Activated B cell treated with CpG ODN at 0.5 μM for 24 hours (primary cell): ENCODE measurements at regions of chr10 and their contacts with region 1.

Region 1: DNA sequence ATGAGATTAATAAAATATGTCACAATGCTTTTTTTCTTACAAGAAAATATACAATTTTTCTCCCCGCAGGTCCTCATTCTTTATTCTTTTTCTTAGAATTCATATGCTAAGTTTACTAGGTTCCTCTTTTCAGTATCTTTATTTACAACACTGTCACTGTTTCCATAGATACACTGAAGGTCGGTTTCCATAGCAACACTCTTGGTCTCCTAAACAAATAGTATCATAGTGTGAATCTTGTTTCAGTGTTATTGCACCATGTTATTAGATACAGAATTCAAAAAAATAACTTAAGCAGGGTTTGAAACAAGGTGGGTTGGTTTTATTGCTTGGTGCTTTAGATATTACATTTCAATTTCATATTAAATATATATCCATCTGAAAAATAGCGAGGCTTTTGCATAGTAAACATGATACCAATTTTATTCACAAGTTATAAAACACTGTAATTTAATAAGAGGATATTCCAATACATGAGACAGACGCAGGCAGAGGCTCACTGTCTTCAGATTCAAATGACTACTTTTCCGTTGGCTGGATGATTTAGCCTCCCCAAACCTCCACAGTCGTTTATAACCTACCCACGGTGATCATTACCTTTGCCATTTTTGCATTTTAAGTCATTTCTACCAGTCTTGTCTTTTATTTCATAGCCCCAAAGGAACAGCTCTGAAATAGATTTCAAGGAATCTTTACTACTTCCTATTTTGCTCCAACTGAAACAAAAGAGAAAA is 88.9 kb upstream of the KLF6 start:
- DNase-seq: no peak
- ATAC-seq: peak; percentile 43
- H3K4me3 Mint-ChIP-seq: peak overlapping the region; percentile 45
- H3K27ac Mint-ChIP-seq: peak overlapping the region; percentile 96
- H3K4me1 Mint-ChIP-seq: peaks cover 60% of the 10 kb centered on the region
- H3K27me3 Mint-ChIP-seq: no peaks in the 10 kb centered on the region
- CTCF ChIP-seq: no peak

Region 2: DNA sequence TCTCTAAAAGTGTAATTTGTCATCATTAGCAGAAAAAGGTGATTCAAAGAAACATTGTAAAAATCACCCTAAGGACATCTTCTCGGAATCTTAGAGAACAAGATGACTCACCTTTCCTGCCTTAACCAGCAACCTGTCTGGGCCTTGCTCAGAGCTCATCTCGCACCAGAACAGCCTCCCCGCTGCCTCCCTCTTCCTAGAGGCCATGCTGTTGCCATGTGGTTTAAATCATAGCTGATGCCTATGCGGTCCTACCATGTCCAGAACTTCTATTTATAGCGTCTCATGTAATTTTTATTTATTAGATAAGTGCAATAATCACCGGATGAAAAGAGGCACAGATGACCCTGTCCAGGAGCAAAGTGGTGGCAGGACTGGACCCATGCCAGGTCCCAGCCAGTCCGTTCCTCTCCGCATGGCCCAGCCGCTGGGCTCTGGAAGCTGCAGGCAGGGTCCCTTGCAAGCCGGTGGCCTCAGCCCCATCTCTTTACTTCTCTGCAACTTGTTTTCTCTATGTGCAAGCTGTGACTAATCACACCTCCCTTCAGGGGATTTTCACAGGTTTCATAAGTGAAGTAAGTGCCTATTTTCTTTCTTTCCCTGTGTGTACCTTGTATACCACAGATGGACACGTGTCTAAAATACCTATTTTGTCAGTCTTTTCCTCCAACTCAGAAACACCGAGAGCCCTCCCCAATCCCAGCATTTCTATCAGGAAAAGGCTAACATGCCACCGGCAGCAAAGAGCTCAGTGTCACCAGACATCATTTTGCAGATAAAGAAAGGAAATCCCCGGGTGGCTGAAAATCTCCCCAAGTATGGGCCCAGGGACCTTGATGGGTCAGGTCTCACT is 116.0 kb before region 1 on chr10:
- CTCF ChIA-PET with region 1: no interaction called
- POLR2A ChIA-PET with region 1: interaction called, 8 read pairs
- intact Hi-C with region 1: loop called (anchors 1 kb)
- DNase-seq: no peak
- ATAC-seq: peak; percentile 60
- H3K4me3 Mint-ChIP-seq: peak overlapping the region; percentile 78
- H3K27ac Mint-ChIP-seq: peak overlapping the region; percentile 99
- H3K4me1 Mint-ChIP-seq: peaks cover 76% of the 10 kb centered on the region
- H3K27me3 Mint-ChIP-seq: no peaks in the 10 kb centered on the region
- CTCF ChIP-seq: no peak

Region 3: DNA sequence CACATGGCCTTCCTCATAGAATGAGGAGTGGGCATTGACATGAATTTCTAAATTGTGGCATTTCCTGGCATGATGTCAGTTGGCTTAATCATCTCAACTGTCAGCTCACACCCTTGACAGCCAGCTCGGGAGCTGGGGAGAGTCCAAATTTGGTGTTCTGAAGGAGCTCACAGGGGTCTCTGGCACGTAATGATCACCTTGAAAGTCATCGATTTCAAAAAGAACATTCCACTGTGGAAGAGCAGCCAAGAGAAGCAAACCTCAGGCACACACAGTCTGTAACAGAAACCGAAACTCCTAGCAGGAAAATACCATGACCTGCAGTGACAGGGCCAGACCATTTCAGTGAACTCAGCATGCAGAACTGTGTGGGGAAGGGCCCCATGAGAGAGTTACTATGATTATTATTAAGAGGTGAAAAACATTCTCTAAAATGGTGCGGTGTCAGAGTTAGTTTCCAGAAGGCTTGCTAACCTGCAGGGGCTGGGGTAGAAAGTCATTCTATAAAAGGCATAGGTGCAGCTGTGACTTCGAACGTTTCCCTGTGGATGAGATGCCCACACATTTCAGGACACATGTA is 62.5 kb before region 1 on chr10:
- CTCF ChIA-PET with region 1: no interaction called
- POLR2A ChIA-PET with region 1: no interaction called
- intact Hi-C with region 1: loop called (anchors 1 kb)
- DNase-seq: peak; percentile 29
- ATAC-seq: peak; percentile 95
- H3K4me3 Mint-ChIP-seq: peak overlapping the region; percentile 74
- H3K27ac Mint-ChIP-seq: peak overlapping the region; percentile 84
- H3K4me1 Mint-ChIP-seq: peaks cover 52% of the 10 kb centered on the region
- H3K27me3 Mint-ChIP-seq: no peaks in the 10 kb centered on the region
- CTCF ChIP-seq: no peak

Region 4: GRCh38 chr10:3887885-3888476 is 14.1 kb after region 1 on chr10:
- CTCF ChIA-PET with region 1: no interaction called
- POLR2A ChIA-PET with region 1: interaction called, 5 read pairs
- intact Hi-C with region 1: loop called (anchors 2 kb)
- DNase-seq: no peak
- ATAC-seq: peak; percentile 83
- H3K4me3 Mint-ChIP-seq: peak overlapping the region; percentile 13
- H3K27ac Mint-ChIP-seq: peak overlapping the region; percentile 78
- H3K4me1 Mint-ChIP-seq: peaks cover 26% of the 10 kb centered on the region
- H3K27me3 Mint-ChIP-seq: peaks cover 3% of the 10 kb centered on the region
- CTCF ChIP-seq: no peak

Region 5: DNA sequence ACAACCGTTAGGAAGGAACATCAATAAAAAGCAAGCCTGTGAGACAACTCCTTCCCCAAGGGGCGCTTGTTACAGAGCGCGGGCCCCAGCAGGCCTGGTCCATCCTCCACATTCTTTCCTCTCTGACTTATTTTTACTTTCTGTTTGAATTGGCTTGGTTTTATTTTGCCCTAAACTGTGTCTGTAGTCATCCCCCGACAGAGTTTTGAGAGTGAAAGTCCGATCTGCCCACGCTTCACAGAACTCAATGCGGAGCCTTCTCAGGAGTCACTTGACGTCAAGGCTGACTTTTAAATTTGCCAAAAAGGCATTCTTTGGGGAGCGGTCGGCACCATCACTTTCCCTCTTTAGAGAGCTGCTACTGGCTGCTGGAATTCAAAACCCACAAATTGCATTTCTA is 61.2 kb after region 1 on chr10:
- CTCF ChIA-PET with region 1: interaction called, 3 read pairs
- POLR2A ChIA-PET with region 1: interaction called, 12 read pairs
- intact Hi-C with region 1: loop called (anchors 1 kb)
- DNase-seq: peak; percentile 31
- ATAC-seq: peak; percentile 98
- H3K4me3 Mint-ChIP-seq: peak overlapping the region; percentile 67
- H3K27ac Mint-ChIP-seq: peak overlapping the region; percentile 88
- H3K4me1 Mint-ChIP-seq: peaks cover 31% of the 10 kb centered on the region
- H3K27me3 Mint-ChIP-seq: no peaks in the 10 kb centered on the region
- CTCF ChIP-seq: no peak

Region 6: DNA sequence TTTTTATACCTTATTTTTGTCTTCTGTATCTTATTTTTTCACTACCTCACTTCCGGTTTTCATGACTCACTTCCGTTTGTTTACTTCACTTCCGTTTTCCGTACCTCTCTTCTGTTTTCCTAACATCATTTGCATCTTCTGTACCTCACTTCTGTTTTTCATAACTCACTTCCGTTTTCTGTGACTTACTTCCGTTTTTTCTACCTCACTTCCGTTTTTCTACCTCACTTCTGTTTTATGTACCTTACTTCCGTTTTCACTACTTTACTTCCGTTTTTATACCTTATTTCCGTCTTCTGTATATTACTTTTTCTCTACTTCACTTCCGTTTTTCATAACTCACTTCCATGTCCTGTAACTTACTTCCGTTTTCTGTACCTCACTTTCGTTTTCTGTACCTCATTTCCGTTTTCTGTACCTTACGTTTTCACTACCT is 459.6 kb after region 1 on chr10:
- CTCF ChIA-PET with region 1: no interaction called
- POLR2A ChIA-PET with region 1: no interaction called
- intact Hi-C with region 1: loop called (anchors 1 kb)
- DNase-seq: no peak
- ATAC-seq: peak; percentile 28
- H3K4me3 Mint-ChIP-seq: no peak overlapping the region
- H3K27ac Mint-ChIP-seq: no peak overlapping the region
- H3K4me1 Mint-ChIP-seq: no peaks in the 10 kb centered on the region
- H3K27me3 Mint-ChIP-seq: no peaks in the 10 kb centered on the region
- CTCF ChIP-seq: no peak

Region 7: GRCh38 chr10:4847561-4848355 is 973.9 kb after region 1 on chr10:
- CTCF ChIA-PET with region 1: no interaction called
- POLR2A ChIA-PET with region 1: no interaction called
- intact Hi-C with region 1: no loop called
- DNase-seq: no peak
- ATAC-seq: no peak
- H3K4me3 Mint-ChIP-seq: no peak overlapping the region
- H3K27ac Mint-ChIP-seq: no peak overlapping the region
- H3K4me1 Mint-ChIP-seq: peaks cover 17% of the 10 kb centered on the region
- H3K27me3 Mint-ChIP-seq: no peaks in the 10 kb centered on the region
- CTCF ChIP-seq: no peak